ENCODE measurements at regions of chr2 and their contacts with region 1.

Region 1: DNA sequence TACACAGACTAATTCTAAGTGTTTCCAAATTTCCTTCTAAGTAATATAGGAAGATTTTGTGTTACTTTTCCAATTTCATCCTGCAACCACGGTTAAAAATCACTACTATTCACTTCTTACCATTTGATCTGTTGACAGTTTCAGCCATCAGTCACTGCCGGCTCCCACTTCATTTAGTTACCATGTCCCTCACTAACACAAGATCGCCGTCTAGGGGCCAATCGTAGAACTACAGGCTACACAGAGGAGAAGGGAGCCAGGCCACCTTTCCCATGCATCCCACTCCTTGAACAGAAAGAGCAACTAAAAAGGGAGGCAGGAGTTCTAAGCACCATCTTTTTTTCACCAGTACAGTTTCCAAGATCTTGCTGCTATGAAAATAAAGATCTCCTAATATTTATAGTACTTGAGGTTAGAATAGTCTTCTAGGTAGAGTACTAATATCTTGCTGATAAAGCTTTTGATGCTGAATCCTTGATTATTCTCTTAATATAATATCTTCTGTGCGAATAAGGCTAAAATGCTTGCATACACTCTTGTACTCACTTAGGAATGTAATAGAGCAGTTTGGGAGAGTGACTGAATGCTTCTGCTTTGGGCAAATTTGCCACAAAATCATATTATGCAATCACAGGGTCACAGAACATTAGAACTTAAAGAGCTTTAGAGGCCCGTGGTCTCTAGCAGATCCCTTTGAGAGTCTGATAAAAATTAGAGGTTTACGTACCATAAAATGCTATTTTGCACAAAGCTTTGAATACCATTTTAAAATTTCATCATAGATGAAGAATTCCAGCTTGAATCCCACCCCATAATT is 39.5 kb upstream of the CYP1B1 start:
- DNase-seq: peak; percentile 92
- H3K4me3 Mint-ChIP-seq: no peak overlapping the region
- H3K27ac Mint-ChIP-seq: no peak overlapping the region
- H3K4me1 Mint-ChIP-seq: peaks cover 8% of the 10 kb centered on the region
- H3K27me3 Mint-ChIP-seq: peaks cover 12% of the 10 kb centered on the region

Region 2: DNA sequence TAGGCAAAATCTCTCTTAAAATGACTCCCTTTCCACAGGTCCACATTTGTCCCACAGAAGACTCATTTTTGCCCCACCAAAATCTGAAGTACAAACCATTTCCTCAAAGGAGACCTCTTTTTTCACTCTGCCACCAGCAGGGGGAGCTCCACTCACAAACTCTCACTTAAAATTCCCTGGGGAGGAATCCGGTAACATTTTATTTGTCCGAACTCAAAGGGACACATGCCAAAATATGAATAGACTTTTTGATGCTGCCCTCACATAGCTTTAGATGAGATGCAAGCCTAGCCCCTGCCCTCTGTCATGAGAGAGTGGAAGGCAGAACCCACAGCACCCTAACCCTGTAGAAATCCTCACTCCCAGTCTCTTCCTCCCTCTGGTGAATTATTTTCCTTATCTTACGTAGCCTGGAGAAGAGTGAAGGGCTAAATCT is 133.3 kb before region 1 on chr2:
- intact Hi-C with region 1: loop called (anchors 1 kb)
- DNase-seq: peak; percentile 86
- H3K4me3 Mint-ChIP-seq: no peak overlapping the region
- H3K27ac Mint-ChIP-seq: no peak overlapping the region
- H3K4me1 Mint-ChIP-seq: peaks cover 8% of the 10 kb centered on the region
- H3K27me3 Mint-ChIP-seq: peaks cover 13% of the 10 kb centered on the region